Pancreas (tissue), 10 donors: ENCODE measurements at regions of chr9 and their contacts with region 1.

Region 1: GRCh38 chr9:128339771-128340690 is at the start of gene SLC27A4:
- DNase-seq: peak; percentile 78 to 91 (median 86)
- ATAC-seq: peak; percentile 90 to 94 (median 92)
- H3K4me3 ChIP-seq: peak within 1 kb of the TSS; percentile 56 to 89 (median 68)
- H3K27ac ChIP-seq: peak within 1 kb of the TSS; percentile 51 to 78 (median 72)
- H3K4me1 ChIP-seq: peaks cover 0 to 8% (median 0%) of the 10 kb centered on the region in 3 donors
- H3K27me3 ChIP-seq: no peaks in the 10 kb centered on the region
- CTCF ChIP-seq: no peak
- total RNA-seq, gene SLC27A4: 9.6 to 14.2 (median 12.4) TPM

Region 2: GRCh38 chr9:128275996-128276573 is 63.9 kb before region 1 on chr9 and contains the starts of genes GOLGA2 and SWI5:
- intact Hi-C with region 1: no loop called
- DNase-seq: peak; percentile 100
- ATAC-seq: peak; percentile 93 to 97 (median 96)
- H3K4me3 ChIP-seq: peak within 1 kb of the TSS; percentile 84 to 91 (median 90)
- H3K27ac ChIP-seq: peak within 1 kb of the TSS; percentile 73 to 76 (median 74)
- H3K4me1 ChIP-seq: peaks cover 0 to 12% (median 5%) of the 10 kb centered on the region in 3 donors
- H3K27me3 ChIP-seq: no peaks in the 10 kb centered on the region
- CTCF ChIP-seq: no peak
- total RNA-seq, gene GOLGA2: 37.9 to 64.0 (median 55.0) TPM
- total RNA-seq, gene SWI5: 6.3 to 9.6 (median 6.8) TPM

Region 3: DNA sequence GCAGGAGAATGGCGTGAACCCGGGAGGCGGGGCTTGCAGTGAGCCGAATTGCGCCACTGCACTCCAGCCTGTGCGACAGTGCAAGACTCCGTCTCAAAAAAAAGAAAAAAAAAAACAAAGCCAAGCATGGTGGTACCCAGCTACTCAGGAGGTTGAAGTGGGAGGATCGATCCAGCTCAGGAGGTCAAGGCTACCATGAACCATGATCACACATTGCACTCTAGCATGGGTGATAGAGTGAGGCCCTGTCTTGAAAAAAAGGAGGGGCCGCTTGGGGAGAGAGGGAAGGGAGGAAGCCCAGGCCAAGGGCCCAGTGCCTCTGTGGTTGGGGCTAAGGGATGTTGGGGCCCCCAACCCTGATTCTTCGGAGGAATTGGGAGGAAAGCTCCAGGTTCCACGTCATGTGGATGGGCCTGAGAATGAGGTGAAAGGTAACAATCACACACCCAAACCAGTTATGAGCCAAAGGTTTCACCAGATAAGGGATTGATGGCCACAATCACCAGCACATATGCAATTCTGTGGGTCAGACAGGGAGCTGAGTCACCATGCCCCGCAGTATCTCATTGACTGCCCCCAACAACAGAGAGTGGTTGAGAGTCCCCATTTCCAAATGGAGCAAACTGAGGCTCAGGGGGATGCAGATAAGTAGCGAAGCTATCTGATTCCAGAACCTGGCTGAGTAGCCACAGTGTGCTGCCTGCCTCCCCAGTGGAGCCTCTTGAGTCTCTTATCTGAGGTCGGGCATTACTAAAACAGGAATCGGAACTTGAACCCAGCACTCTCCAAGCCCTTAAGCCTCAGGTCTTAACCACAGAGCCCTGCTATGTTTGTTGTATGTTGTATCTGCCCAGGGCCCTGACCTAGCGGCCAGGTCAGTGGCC is 43.5 kb before region 1 on chr9:
- intact Hi-C with region 1: loop called in 1 of 3 experiments (anchors 10 kb)
- DNase-seq: no peak
- ATAC-seq: no peak
- H3K4me3 ChIP-seq: no peak overlapping the region
- H3K27ac ChIP-seq: no peak overlapping the region
- H3K4me1 ChIP-seq: peaks cover 0 to 6% (median 6%) of the 10 kb centered on the region in 3 donors
- H3K27me3 ChIP-seq: no peaks in the 10 kb centered on the region
- CTCF ChIP-seq: no peak

Region 4: DNA sequence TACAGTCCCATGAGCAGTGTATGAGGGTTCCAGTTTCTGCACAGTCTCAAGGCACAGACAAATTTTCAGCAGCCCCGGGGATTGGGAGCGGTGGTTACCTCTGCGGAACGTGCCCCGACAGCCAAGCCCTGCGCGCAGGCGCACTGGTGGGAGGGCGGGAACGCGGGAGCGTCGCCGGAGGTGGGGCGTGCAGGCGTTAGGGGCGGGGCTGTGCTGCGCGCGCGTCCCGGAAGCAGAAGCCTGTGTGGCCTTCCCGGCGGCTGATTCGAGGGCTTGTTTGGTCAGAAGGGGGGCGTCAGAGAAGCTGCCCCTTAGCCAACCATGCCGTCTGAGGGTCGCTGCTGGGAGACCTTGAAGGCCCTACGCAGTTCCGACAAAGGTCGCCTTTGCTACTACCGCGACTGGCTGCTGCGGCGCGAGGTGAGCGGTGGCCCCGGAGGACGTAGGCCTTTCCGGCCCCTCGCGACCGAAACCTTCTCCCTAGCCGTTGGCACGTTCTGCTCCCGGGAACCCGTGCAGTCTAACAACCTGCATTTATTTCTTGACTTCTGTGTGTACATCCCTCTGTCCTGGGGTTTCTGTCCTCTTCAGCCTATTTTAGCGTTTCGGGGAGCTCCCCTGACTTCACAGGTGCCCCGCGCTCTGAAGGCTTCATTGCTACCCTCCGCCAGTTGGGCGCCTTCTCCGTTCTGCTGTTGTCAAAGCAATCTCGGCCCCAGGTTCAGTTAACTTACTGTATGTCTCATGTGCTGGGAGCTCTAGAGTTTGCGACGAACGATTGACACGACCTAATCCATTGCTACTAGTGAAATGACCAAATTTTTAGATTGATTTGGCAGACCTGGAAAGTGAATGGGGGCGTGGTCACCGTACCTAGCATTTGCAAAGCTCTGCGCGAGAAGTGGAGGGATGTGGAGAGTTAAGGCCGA is 164.7 kb after region 1 on chr9 and contains the start of gene GLE1:
- intact Hi-C with region 1: no loop called
- DNase-seq: peak; percentile 92 to 99 (median 96)
- ATAC-seq: peak; percentile 99 to 100 (median 99)
- H3K4me3 ChIP-seq: peak within 1 kb of the TSS; percentile 68 to 95 (median 73)
- H3K27ac ChIP-seq: peak within 1 kb of the TSS; percentile 79 to 87 (median 82)
- H3K4me1 ChIP-seq: peaks cover 4 to 22% (median 10%) of the 10 kb centered on the region in 3 donors
- H3K27me3 ChIP-seq: no peaks in the 10 kb centered on the region
- CTCF ChIP-seq: no peak
- total RNA-seq, gene GLE1: 4.8 to 11.1 (median 8.0) TPM